ENCODE measurements at regions of chr2 and their contacts with region 1.

Region 1: GRCh38 chr2:135473567-135473966 is 57.5 kb downstream of the ZRANB3 start:
- DNase-seq: peak; percentile 57
- ATAC-seq: peak; percentile 87
- H3K4me3 ChIP-seq: no peak overlapping the region
- H3K27ac ChIP-seq: no peak overlapping the region
- H3K4me1 ChIP-seq: no peaks in the 10 kb centered on the region
- H3K27me3 ChIP-seq: no peaks in the 10 kb centered on the region
- CTCF ChIP-seq: peak; percentile 74
- EP300 ChIP-seq: no peak
- POLR2A ChIP-seq: no peak
- RAD21 ChIP-seq: peak; percentile 69

Region 2: DNA sequence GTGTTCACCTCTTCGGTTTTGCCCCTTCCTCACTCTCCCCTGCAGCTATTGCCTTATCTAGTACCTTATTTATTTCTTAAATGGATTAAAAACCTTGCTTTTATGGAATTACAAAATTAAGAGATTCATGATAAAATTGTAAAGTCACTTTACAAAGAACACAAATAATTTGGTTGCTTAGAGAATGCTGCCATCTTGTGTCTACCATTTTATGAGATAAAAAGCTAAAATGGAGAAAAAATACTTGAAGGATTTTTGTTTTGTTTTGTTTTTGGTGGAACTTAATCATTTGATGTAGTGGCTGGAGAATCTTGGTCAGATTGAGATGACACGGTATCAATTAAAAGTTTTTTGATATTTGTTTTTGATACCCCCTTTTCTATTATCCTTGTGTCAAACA is 127.3 kb after region 1 on chr2:
- CTCF ChIA-PET with region 1: interaction called, 8 read pairs
- POLR2A ChIA-PET with region 1: no interaction called
- in situ Hi-C with region 1: no loop called
- intact Hi-C with region 1: loop called (anchors 1 kb)
- DNase-seq: no peak
- ATAC-seq: no peak
- H3K4me3 ChIP-seq: no peak overlapping the region
- H3K27ac ChIP-seq: no peak overlapping the region
- H3K4me1 ChIP-seq: peaks cover 5% of the 10 kb centered on the region; the same call in 1 of the 2 replicates
- H3K27me3 ChIP-seq: no peaks in the 10 kb centered on the region
- CTCF ChIP-seq: peak; percentile 16; the same call in 1 of the 2 replicates
- EP300 ChIP-seq: no peak
- POLR2A ChIP-seq: no peak
- RAD21 ChIP-seq: no peak

Region 3: DNA sequence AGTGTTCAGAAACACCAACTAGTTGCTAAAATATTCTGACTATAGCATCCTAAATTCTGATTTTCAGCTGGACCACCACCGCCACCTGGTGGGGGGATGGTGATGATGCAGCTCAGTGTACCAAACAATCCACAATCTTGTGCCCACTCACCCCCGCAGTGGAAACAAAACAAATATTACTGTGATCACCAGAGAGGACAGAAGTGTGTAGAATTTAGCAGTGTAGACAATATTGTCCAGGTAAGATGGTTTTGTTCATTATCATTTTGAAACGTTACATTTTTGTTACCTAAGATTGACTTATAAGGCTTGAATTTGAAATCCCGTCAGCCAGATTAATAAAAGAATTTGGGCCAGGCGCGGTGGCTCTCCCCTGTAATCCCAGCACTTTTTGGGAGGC is 236.4 kb after region 1 on chr2:
- CTCF ChIA-PET with region 1: interaction called, 27 read pairs
- POLR2A ChIA-PET with region 1: no interaction called
- in situ Hi-C with region 1: loop called (anchors 5 kb)
- intact Hi-C with region 1: loop called (anchors 1 kb)
- DNase-seq: peak; percentile 44
- ATAC-seq: peak; percentile 87
- H3K4me3 ChIP-seq: no peak overlapping the region
- H3K27ac ChIP-seq: no peak overlapping the region
- H3K4me1 ChIP-seq: no peaks in the 10 kb centered on the region
- H3K27me3 ChIP-seq: no peaks in the 10 kb centered on the region
- CTCF ChIP-seq: peak; percentile 90
- EP300 ChIP-seq: no peak
- POLR2A ChIP-seq: no peak
- RAD21 ChIP-seq: peak; percentile 77

Region 4: GRCh38 chr2:136141510-136142149 is 668.1 kb after region 1 on chr2:
- CTCF ChIA-PET with region 1: no interaction called
- POLR2A ChIA-PET with region 1: no interaction called
- in situ Hi-C with region 1: no loop called
- intact Hi-C with region 1: no loop called
- DNase-seq: no peak
- ATAC-seq: no peak
- H3K4me3 ChIP-seq: no peak overlapping the region
- H3K27ac ChIP-seq: no peak overlapping the region
- H3K4me1 ChIP-seq: no peaks in the 10 kb centered on the region
- H3K27me3 ChIP-seq: peaks cover 0 to 11% of the 10 kb centered on the region in 2 experiments; a peak in 1 of 5 replicates
- CTCF ChIP-seq: no peak
- EP300 ChIP-seq: no peak
- POLR2A ChIP-seq: no peak
- RAD21 ChIP-seq: no peak

Measured in HepG2 (cell line).